Right lobe of liver (tissue), 6 donors: ENCODE measurements at regions of chr7 and their contacts with region 1.

Region 1: DNA sequence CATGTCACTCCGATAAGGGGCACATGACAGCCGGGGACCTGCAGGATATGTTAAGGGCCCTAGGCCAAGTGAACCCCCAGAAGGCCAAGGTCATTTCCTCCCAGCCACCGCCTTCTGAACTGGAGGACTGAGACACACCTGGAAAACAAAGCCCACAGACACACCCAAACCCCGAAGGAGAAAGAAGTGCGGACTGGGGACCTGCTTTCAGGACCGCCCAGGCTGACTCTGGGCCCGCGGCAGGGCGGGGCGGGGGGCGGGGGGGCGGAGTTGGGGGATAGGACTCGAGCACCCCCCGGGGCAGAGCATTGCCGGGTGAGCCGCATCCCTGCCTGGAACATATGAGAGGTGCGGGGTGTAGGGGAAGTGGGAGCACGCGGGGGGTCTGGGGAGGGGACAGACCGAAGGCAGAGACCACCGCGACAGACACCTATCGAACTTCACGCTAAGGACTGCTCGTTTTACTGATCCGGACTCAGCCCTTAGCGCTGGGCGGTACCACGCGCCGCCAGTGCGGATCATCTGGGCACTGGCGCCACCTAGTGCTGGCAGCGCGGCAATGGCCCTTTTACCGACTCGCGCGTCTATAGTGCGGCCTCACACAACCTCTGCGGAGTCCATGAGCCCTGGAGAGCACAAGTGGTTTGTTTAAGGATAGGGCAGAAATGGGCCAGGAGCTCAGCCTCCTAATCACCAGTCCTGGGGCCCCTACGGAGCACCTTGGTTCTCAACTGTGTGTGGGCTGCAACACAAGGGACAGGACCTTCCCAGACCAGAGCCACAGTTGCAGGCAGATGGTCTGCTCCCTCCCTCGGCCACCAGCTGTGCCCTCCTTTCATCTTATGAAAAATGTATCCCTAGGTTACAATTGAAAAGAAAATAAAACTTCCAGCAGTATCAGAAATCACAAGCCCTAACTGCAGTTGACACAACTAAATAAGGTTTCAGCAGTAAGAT is 157.6 kb downstream of the HERPUD2 start:
- DNase-seq: peak; percentile 83 to 88 (median 87)
- ATAC-seq: peak; percentile 87 to 91 (median 89)
- H3K4me3 ChIP-seq: peak overlapping the region; percentile 34 to 54 (median 52)
- H3K27ac ChIP-seq: peak overlapping the region; percentile 78 to 89 (median 79)
- H3K4me1 ChIP-seq: peaks cover 0 to 15% (median 2%) of the 10 kb centered on the region in 4 donors
- H3K27me3 ChIP-seq: no peaks in the 10 kb centered on the region
- CTCF ChIP-seq: peak; percentile 89 to 95 (median 94)
- POLR2A ChIP-seq: no peak

Region 2: GRCh38 chr7:35415411-35415822 is 121.9 kb before region 1 on chr7:
- intact Hi-C with region 1: loop called in 1 of 2 experiments (anchors 10 kb)
- DNase-seq: no peak
- ATAC-seq: no peak
- H3K4me3 ChIP-seq: no peak overlapping the region
- H3K27ac ChIP-seq: no peak overlapping the region
- H3K4me1 ChIP-seq: no peaks in the 10 kb centered on the region
- H3K27me3 ChIP-seq: no peaks in the 10 kb centered on the region
- CTCF ChIP-seq: no peak
- POLR2A ChIP-seq: no peak

Region 3: GRCh38 chr7:35492451-35493175 is 44.7 kb before region 1 on chr7:
- intact Hi-C with region 1: no loop called
- DNase-seq: no peak
- ATAC-seq: no peak
- H3K4me3 ChIP-seq: no peak overlapping the region
- H3K27ac ChIP-seq: no peak overlapping the region
- H3K4me1 ChIP-seq: no peaks in the 10 kb centered on the region
- H3K27me3 ChIP-seq: no peaks in the 10 kb centered on the region
- CTCF ChIP-seq: no peak
- POLR2A ChIP-seq: no peak